ENCODE measurements at regions of chr3 and their contacts with region 1.

Region 1: DNA sequence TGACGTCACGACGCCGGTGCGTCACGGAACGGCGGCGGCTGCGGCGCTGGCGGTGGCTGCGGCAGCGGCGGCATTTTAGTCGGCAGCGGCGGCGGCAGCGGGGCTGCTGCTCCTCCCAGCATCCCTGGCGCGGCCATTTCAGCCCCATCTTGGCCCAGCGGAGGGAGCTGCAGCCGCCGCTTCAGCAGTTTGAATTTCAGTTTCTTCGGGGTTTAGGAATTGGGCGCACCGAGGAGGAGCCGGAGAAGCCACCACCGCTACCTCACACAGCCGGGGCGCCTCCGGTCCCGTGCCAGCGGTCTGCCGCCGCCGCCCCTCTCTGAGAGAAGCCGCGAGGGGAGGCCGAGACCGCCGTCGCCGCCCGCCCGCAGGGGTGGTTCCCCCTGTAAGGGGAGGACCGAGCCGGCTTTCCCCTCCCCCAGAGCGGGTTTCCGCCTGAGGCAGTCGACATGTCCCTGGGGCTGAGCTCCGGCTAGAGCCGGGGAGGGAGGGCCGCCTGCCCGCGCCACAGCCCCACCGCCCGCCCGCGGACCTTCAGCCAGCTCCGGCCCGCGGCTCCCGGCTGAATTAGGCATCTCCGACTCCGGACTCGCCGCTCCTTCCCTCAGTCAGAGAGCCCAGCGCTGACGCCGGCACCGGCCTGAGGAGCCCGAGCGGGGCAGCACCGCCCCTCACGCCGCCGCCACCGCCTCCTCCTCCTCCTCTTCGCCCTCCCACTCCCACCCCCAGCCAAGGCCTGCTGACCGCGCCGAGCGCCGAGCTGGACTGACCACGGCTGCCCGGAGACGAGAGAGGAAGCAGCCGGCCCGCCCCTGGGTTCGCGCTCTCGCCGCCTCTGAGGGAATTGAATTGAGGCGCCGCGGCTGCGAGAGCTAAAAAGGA is at the start of gene TSC22D2:
- DNase-seq: peak; percentile 95
- ATAC-seq: peak; percentile 64
- H3K4me3 ChIP-seq: peak within 1 kb of the TSS; percentile 87
- H3K27ac ChIP-seq: peak within 1 kb of the TSS; percentile 91
- H3K4me1 ChIP-seq: peaks cover 19% of the 10 kb centered on the region
- H3K27me3 ChIP-seq: no peaks in the 10 kb centered on the region
- CTCF ChIP-seq: peak; percentile 39; the same call in 1 of the 2 replicates
- total RNA-seq, gene TSC22D2: 9.6 and 15.7 TPM in 2 replicates

Region 2: GRCh38 chr3:150286390-150287147 is 121.9 kb before region 1 on chr3:
- CTCF ChIA-PET with region 1: interaction called, 7 read pairs
- POLR2A ChIA-PET with region 1: no interaction called
- intact Hi-C with region 1: loop called (anchors 1 kb)
- DNase-seq: peak; percentile 80
- ATAC-seq: peak; percentile 98
- H3K4me3 ChIP-seq: peak overlapping the region; percentile 29
- H3K27ac ChIP-seq: no peak overlapping the region
- H3K4me1 ChIP-seq: peaks cover 7% of the 10 kb centered on the region
- H3K27me3 ChIP-seq: no peaks in the 10 kb centered on the region
- CTCF ChIP-seq: peak; percentile 87

Region 3: GRCh38 chr3:150319904-150320303 is 88.6 kb before region 1 on chr3:
- CTCF ChIA-PET with region 1: interaction called, 3 read pairs
- POLR2A ChIA-PET with region 1: interaction called, 7 read pairs
- intact Hi-C with region 1: loop called (anchors 1 kb)
- DNase-seq: peak; percentile 98
- ATAC-seq: peak; percentile 81
- H3K4me3 ChIP-seq: peak overlapping the region; percentile 45
- H3K27ac ChIP-seq: peak overlapping the region; percentile 29
- H3K4me1 ChIP-seq: peaks cover 55% of the 10 kb centered on the region
- H3K27me3 ChIP-seq: no peaks in the 10 kb centered on the region
- CTCF ChIP-seq: no peak

Region 4: DNA sequence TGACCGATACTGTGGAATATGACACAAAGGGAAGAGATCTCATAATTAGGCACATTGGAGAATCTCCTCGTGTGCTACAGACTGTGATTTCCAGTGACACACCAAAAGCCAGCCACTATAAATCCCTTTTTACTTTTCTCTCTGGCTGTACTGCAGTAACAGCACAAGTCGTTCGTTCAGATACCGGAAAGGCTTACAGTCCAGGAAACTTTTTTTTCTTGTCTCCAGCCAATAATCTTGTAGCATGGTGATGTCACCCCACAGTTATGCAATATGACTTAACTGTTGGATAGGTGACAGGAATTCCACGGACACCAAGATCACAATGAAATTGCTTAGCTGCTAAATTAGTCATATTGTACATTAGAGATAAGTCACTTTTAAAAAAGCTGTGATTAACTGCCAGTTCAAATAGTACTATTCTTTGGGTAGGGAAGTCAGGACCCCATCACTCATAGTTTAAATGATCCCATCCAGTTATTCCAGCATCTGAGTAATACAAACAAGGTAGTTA is 36.7 kb before region 1 on chr3:
- CTCF ChIA-PET with region 1: no interaction called
- POLR2A ChIA-PET with region 1: interaction called, 4 read pairs
- intact Hi-C with region 1: loop called (anchors 1 kb)
- DNase-seq: peak; percentile 100
- ATAC-seq: peak; percentile 69
- H3K4me3 ChIP-seq: peak overlapping the region; percentile 63
- H3K27ac ChIP-seq: peak overlapping the region; percentile 84
- H3K4me1 ChIP-seq: peaks cover 49% of the 10 kb centered on the region
- H3K27me3 ChIP-seq: no peaks in the 10 kb centered on the region
- CTCF ChIP-seq: no peak